BJ (cell line): ENCODE measurements at regions of chr12 and their contacts with region 1.

Region 1: GRCh38 chr12:569803-570434 is 93.3 kb downstream of the NINJ2 start:
- DNase-seq: no peak
- H3K4me3 ChIP-seq: peak overlapping the region; percentile 59
- H3K27me3 ChIP-seq: no peaks in the 10 kb centered on the region; the same call in 1 of the 2 replicates
- CTCF ChIP-seq: peak; percentile 94

Region 2: GRCh38 chr12:627863-628741 is 58.2 kb after region 1 on chr12:
- CTCF ChIA-PET with region 1: no interaction called
- POLR2A ChIA-PET with region 1: no interaction called
- DNase-seq: no peak
- H3K4me3 ChIP-seq: no peak overlapping the region
- H3K27me3 ChIP-seq: no peaks in the 10 kb centered on the region
- CTCF ChIP-seq: no peak

Region 3: DNA sequence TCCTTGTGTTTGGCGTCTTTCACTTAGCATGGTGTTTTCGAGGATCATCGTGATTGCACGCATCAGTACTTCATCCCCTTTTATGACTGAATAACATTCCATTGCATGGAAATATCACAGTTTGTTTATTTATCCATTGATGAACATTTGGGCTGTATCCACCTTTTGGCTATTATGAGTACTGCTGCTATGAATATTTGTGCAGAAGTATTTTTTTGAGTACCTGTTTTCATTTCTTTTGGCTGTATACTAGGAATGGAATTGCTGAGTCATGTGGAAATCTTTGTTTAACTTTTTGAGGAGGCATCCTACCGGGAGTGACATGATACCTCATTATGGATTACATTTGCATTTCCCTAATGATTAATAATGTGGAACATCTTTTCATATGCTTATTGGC is 248.8 kb after region 1 on chr12:
- CTCF ChIA-PET with region 1: interaction called, 64 read pairs
- POLR2A ChIA-PET with region 1: no interaction called
- DNase-seq: no peak
- H3K4me3 ChIP-seq: no peak overlapping the region
- H3K27me3 ChIP-seq: no peaks in the 10 kb centered on the region
- CTCF ChIP-seq: no peak

Region 4: DNA sequence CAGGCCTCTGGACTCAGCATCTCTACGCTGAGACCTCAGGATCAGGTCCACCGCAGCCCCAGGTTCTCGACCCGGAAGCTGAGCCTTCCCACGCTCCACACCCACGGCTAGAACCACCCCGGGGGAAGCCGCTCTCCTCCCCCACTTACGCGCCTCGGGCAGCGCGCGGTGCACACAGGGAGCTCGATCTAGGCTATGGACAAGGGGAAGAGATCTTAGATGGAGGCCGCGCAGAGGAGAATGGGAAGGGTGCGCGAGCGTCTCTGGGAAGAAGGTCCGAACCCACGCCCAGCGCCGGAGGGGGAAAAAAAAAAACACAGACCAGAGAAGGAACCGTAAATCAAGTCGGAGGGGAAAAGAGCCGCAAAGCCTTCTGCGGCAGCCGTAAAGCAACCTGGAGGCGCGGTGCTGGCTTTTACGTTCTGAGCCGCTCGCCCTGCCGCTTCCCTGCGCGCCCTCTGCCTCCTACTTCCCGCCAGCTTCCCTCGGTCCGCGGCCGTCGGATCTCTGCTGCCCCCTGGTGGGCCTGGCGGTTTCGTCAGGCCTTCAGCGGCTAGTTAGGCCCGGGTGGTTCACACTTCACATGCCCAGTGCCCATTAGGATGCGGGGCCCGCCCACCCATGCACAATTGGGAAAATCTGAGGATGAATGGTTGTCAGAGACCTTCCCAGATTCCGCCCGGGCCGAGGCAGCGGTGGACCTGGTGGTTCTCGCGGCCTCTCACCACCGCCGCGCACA is 379.7 kb after region 1 on chr12 and contains the start of gene RAD52:
- CTCF ChIA-PET with region 1: interaction called, 21 read pairs
- POLR2A ChIA-PET with region 1: no interaction called
- DNase-seq: peak; percentile 92
- H3K4me3 ChIP-seq: peak within 1 kb of the TSS; percentile 75
- H3K27me3 ChIP-seq: no peaks in the 10 kb centered on the region
- CTCF ChIP-seq: peak; percentile 93
- polyA plus RNA-seq, gene RAD52: 13.1 and 15.3 TPM in 2 replicates